GM18951 (cell line): ENCODE measurements at regions of chr6 and their contacts with region 1.

Region 1: GRCh38 chr6:36623547-36624459 is 29.6 kb downstream of the SRSF3 start:
- POLR2A ChIP-seq: no peak

Region 2: GRCh38 chr6:36682328-36683144 is 58.7 kb after region 1 on chr6:
- in situ Hi-C with region 1: loop called (anchors 5 kb)
- POLR2A ChIP-seq: no peak

Region 3: DNA sequence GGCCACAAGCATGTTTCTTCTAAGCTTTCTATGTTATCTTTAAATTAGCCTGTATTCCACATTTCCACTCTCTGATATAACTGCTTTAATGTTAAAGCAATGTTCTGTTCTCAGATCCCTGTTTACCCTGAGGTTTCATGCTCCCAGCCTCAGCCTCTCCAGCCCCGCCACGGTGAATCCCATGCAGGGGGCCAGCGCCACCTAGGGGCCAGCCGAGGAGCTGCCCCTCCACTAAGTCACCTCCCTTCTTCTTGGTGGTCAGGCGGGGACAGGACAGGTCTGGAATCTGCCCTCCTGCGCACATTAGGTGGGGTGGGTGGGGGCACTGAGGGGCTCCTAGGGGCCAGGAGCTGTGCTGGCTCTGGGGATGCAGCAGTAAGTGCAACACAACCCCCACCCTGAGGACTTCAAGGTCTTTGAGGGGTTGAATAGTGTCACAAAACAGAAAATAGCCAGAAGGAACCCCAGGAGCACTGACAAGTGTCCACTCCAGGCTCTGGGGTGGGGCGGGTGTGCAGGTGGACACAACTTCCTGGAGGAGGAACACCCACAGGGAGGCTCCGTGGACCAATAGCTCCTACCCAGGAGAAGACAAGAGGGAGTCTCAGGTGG is 135.5 kb after region 1 on chr6:
- in situ Hi-C with region 1: loop called (anchors 10 kb)
- POLR2A ChIP-seq: no peak

Region 4: DNA sequence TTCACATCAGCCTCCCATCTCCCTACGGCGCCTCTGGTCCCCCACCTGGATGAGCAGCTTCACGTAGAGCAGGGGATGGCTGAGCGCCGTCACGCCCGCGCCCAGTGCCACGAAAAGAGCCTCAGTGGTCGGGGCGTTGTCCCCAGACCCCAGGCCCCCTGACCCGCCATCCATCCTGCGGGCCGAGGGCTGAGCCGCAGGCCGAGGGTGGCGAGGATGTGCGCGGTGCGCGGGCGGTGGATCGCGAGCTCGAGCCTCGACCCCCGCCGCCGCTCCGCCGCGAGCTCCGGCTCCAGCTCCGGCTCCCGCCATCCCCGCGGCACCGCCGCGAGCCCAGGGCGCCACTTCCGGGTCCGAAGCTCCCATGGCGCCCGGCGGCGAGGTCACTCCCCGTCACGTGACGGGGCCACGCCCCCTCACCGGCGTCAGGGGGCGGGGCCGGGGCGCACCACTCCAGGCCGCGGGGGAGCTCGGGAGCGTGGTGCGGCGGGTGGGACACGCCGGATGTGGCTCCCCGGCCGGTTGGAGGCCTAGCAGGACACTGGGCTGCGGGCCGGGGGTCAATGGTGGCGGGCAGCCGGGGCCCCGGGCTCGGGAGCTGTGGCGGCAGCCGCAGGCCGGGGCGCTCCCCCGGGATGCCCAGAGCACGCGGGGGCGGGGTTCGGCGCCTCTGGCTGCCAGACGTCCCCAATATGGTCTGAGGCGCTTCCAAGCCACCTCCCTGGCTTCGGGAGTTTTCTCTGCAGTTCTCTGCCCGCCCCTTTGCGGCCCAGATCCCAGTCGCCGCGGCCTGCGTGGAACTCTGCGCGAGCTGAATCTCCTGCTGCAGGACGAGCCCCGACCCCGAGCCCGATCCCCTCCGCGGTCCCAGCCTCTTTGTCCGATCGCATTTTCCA is 362.3 kb after region 1 on chr6 and contains the start of gene MTCH1:
- in situ Hi-C with region 1: loop called (anchors 25 kb)
- POLR2A ChIP-seq: peak; percentile 99

Region 5: DNA sequence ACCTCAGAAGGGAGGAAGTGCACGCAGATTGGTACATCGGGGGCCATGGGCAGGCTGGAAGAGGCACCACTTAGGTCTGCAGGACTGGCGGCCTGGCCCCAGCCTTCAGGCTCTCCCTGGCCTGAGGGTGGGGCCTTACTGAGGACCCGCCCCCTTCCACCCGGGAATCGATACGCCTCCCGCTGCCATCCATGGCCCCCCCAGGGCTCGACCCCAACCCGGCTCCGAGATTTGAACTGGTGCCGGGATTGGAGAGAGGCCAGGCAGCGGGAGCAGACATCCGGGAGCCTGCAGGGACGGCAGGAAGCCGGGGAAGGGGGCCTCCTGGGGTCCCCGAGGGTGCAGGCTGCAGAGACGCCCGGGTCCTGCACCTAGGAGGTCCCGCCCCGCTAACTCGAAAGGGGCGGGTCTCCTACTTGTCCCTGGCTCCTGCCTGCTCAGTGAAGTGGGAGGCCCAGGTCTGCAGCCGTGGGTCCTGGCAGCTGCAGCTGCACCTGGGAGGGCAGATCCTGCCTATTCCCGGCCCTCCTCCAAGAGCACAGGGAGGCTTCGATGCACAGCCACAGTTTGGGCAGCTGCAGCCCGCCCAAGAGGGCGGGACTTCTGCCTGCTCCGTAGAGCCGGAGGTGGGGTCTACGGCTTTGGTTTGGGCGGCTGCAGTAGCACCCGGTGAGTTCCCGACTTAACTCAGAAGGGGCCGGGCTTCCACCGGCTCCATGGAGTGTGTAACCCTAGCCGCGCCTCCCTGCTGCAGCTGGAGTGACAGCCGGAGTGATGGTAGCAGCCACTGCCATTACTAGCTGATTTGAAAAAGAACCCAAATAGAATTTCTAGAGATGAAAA is 598.5 kb after region 1 on chr6:
- in situ Hi-C with region 1: loop called (anchors 25 kb)
- POLR2A ChIP-seq: peak; percentile 24